ENCODE measurements at regions of chr11 and their contacts with region 1.

Region 1: GRCh38 chr11:126146433-126147192 is 64.8 kb downstream of the RPUSD4 start:
- DNase-seq: peak; percentile 96 to 97
- H3K4me3 ChIP-seq: no peak overlapping the region
- H3K27ac ChIP-seq: peak overlapping the region; percentile 89 to 91 (median 91)
- H3K4me1 ChIP-seq: peaks cover 44 to 58% of the 10 kb centered on the region in 2 donors
- H3K27me3 ChIP-seq: no peaks in the 10 kb centered on the region
- CTCF ChIP-seq: no peak
- POLR2A ChIP-seq: peak in 1 of 2 donors; percentile 36

Region 2: GRCh38 chr11:126115816-126116331 is 30.7 kb before region 1 on chr11:
- intact Hi-C with region 1: loop called (anchors 5 kb)
- DNase-seq: peak; percentile 94
- H3K4me3 ChIP-seq: no peak overlapping the region
- H3K27ac ChIP-seq: peak overlapping the region; percentile 93 to 96 (median 95)
- H3K4me1 ChIP-seq: peaks cover 52 to 75% of the 10 kb centered on the region in 2 donors
- H3K27me3 ChIP-seq: no peaks in the 10 kb centered on the region
- CTCF ChIP-seq: peak in 3 of 6 experiments; percentile 27 to 34 (median 32)
- POLR2A ChIP-seq: peak in 1 of 2 donors; percentile 8

Measured in thyroid gland (tissue), 4 donors.